Natural killer cell (primary cell): ENCODE measurements at regions of chr13 and their contacts with region 1.

Region 1: GRCh38 chr13:95378603-95379002 is 77.4 kb upstream of the ABCC4 start:
- DNase-seq: no peak
- ATAC-seq: no peak
- H3K4me3 ChIP-seq: no peak overlapping the region
- H3K4me3 Mint-ChIP-seq: no peak overlapping the region
- H3K27ac ChIP-seq: no peak overlapping the region
- H3K27ac Mint-ChIP-seq: no peak overlapping the region
- H3K4me1 ChIP-seq: peaks cover 5% of the 10 kb centered on the region
- H3K4me1 Mint-ChIP-seq: peaks cover 0 to 5% of the 10 kb centered on the region in 2 donors
- H3K27me3 ChIP-seq: no peaks in the 10 kb centered on the region
- H3K27me3 Mint-ChIP-seq: peaks cover 0 to 9% of the 10 kb centered on the region in 2 donors
- CTCF ChIP-seq: no peak

Region 2: GRCh38 chr13:95191821-95192563 is 186.6 kb before region 1 on chr13:
- intact Hi-C with region 1: loop called (anchors 1 kb)
- DNase-seq: peak; percentile 33 to 72
- ATAC-seq: peak in 2 of 3 donors; percentile 51 to 58
- H3K4me3 ChIP-seq: no peak overlapping the region
- H3K4me3 Mint-ChIP-seq: no peak overlapping the region
- H3K27ac ChIP-seq: no peak overlapping the region
- H3K27ac Mint-ChIP-seq: no peak overlapping the region
- H3K4me1 ChIP-seq: no peaks in the 10 kb centered on the region
- H3K4me1 Mint-ChIP-seq: peaks cover 5 to 6% of the 10 kb centered on the region in 2 donors
- H3K27me3 ChIP-seq: no peaks in the 10 kb centered on the region
- H3K27me3 Mint-ChIP-seq: no peaks in the 10 kb centered on the region
- CTCF ChIP-seq: peak; percentile 57

Region 3: DNA sequence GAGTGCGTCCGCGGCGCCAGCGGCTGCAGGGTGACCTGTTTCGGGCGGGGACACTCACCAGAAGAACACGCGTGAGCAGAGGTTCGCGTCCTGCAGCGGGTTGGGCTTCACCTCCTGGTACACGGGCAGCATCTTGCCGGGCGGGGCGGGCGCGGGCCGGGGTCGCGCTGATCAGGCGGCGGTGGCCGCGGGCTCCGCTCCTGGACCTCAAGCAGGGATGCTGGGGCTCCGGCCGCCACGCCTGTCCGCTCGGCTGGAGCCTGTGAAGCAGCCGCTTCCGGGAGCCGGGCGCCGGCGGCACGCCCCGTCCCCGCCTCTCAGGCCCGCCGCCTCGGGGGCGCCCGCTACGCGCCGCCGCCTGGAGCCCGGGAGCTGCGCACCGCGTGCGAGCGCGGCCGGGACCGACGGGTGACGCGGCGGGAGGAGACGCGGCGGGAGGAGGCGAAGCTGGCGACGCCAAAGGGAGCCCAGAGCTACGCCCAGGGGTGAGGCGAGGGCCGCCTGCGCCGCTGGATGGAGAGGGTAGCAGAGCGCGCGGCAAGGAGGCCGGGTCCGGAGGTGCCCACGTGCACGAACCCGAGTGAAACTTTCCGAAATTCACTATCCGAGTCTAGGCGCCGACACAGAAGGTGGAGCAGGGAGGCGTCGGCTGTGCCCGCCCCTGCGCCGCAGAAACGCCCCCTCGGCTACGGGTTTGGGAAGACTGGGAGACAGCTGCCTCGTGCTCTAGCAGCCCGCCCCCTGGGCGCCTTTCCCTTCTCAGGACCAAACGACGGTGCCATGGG is 77.2 kb before region 1 on chr13 and contains the start of gene ABCC4:
- intact Hi-C with region 1: loop called (anchors 5 kb)
- DNase-seq: peak; percentile 32 to 69
- ATAC-seq: peak; percentile 83 to 84 (median 83)
- H3K4me3 ChIP-seq: peak within 1 kb of the TSS; percentile 63
- H3K4me3 Mint-ChIP-seq: peak within 1 kb of the TSS; percentile 90
- H3K27ac ChIP-seq: no peak within 1 kb of the TSS
- H3K27ac Mint-ChIP-seq: peak within 1 kb of the TSS in 1 of 2 donors; percentile 73
- H3K4me1 ChIP-seq: peaks cover 16% of the 10 kb centered on the region
- H3K4me1 Mint-ChIP-seq: peaks cover 15 to 16% of the 10 kb centered on the region in 2 donors
- H3K27me3 ChIP-seq: no peaks in the 10 kb centered on the region
- H3K27me3 Mint-ChIP-seq: peaks cover 0 to 2% of the 10 kb centered on the region in 2 donors
- CTCF ChIP-seq: no peak
- total RNA-seq, gene ABCC4: 4.8 to 10.3 (median 6.5) TPM